ENCODE measurements at regions of chr13 and their contacts with region 1.

Region 1: DNA sequence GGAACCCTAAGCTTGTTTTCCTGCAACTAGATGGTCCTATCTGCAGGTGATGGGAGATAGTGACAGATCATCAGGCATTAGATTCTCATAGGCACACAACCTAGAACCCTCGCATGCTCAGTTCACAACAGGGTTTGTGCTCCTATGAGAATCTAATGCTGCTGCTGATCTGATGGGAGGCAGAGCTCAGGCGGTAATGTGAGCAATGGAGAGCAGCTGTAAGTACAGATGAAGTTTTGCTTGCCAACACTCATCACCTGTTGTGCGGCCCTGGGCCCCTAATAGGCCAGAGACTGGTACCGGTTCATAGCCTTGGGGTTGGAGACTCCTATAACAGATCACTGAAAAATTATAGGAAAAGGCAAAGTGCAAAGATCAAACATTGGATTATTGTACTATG is 267.2 kb downstream of the PCDH9 start:
- DNase-seq: no peak
- ATAC-seq: no peak
- H3K4me3 ChIP-seq: no peak overlapping the region
- H3K4me3 Mint-ChIP-seq: no peak overlapping the region
- H3K27ac ChIP-seq: no peak overlapping the region
- H3K27ac Mint-ChIP-seq: no peak overlapping the region
- H3K4me1 ChIP-seq: no peaks in the 10 kb centered on the region
- H3K4me1 Mint-ChIP-seq: peaks cover 6% of the 10 kb centered on the region
- H3K27me3 ChIP-seq: no peaks in the 10 kb centered on the region
- H3K27me3 Mint-ChIP-seq: no peaks in the 10 kb centered on the region
- CTCF ChIP-seq: no peak

Region 2: DNA sequence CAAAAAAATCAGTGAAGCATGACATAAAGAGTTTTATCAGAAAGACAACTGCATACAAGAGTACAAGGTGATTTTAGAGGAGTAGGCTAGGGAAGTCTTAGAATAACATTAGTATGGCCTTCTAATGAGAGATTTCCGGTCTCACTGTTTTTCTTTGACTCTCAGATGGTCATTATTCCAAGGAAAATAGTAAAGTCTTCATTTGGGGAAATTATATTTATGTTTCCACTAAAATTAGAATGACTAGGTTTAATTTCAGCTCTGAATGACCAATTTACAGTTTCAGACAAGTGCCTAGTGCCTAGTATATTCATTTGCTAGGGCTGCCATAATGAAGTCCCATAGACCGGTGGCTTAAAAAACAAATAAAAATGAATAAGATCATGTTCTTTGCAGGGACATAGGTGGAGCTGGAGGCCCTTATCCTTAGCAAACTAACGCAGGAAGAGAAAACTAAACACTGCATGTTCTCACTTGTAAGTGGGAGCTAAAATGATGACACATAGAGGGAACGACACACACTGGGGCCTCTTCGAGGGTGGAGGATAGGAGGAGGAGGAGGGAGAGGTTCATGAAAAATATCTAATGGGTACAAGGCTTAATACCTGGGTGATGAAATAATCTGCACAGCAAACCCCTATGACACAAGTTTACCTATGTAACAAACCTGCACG is 36.0 kb before region 1 on chr13:
- CTCF ChIA-PET with region 1: no interaction called
- POLR2A ChIA-PET with region 1: no interaction called
- intact Hi-C with region 1: loop called (anchors 5 kb)
- DNase-seq: no peak
- ATAC-seq: no peak
- H3K4me3 ChIP-seq: no peak overlapping the region
- H3K4me3 Mint-ChIP-seq: no peak overlapping the region
- H3K27ac ChIP-seq: no peak overlapping the region
- H3K27ac Mint-ChIP-seq: no peak overlapping the region
- H3K4me1 ChIP-seq: no peaks in the 10 kb centered on the region
- H3K4me1 Mint-ChIP-seq: peaks cover 6% of the 10 kb centered on the region
- H3K27me3 ChIP-seq: no peaks in the 10 kb centered on the region
- H3K27me3 Mint-ChIP-seq: no peaks in the 10 kb centered on the region
- CTCF ChIP-seq: no peak

Measured in B cell (primary cell).